AG04449 (cell line): ENCODE measurements at regions of chr1 and their contacts with region 1.

Region 1: DNA sequence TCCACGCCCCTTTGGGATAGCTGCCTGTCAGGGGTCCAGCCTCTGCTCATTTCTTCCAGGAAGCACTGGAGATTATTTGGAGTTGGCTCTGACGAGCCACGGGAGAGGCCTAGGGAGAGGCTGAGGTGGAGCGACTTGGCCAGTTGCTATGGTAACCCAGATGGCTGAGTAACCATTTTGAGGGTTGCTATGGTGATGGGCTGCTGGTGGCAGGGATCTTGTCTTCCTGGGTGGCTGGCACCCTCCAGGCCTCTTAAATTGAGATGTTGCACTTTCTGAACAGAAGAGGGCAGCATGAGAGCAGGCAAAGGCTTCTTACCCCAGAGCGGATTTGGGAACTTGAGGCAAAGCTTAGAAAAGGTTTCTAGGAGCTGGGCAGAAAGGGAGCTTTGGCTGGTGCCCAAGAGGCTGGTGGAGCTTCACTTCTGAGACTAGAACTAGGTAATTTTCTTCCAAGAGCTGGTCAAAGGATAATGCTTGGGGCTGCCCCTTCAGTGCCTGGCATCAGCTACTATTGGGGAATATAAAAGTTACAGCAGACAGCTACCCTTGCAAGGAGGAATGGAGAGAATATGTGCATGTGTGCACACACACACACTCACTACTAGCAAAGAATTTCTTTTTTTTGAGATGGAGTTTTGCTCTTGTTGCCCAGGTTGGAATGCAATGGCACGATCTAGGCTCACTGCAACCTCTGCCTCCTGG is 72.5 kb downstream of the NDUFS5 start:
- DNase-seq: peak; percentile 78
- H3K4me3 ChIP-seq: no peak overlapping the region
- CTCF ChIP-seq: peak; percentile 55

Region 2: DNA sequence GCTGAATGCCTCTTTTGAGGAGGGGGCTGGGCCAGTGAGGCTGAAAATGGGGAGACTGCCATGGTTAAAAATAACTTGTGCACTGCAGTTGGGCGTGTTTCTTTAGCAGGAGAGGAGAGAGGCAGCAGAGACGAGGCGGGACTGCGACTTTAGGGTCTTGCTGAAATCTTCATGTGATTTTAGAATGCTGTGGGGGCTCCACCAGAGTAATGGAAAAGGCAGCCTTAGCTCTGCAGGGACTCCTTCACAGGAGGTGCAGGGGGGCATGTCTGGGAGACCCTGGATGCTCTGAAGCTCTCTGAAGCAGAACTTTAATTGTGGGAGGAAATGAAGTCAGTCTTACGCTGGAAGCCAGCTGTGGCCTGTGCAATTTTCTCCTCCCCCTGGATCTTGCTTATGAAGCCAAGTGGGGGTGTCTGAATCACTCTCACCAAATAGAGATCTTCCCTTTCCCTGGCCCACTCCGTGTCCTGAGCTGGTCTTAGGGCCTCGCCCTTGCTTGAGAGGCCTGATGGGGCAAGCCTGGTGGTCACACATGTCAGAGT is 11.8 kb before region 1 on chr1:
- CTCF ChIA-PET with region 1: interaction called, 53 read pairs
- POLR2A ChIA-PET with region 1: no interaction called
- DNase-seq: no peak
- H3K4me3 ChIP-seq: no peak overlapping the region
- CTCF ChIP-seq: no peak

Region 3: GRCh38 chr1:39204441-39205081 is 105.9 kb after region 1 on chr1 and contains the start of gene MACF1:
- CTCF ChIA-PET with region 1: interaction called, 11 read pairs
- POLR2A ChIA-PET with region 1: no interaction called
- DNase-seq: peak; percentile 81
- H3K4me3 ChIP-seq: peak within 1 kb of the TSS; percentile 70
- CTCF ChIP-seq: peak; percentile 41

Region 4: GRCh38 chr1:39258146-39258924 is 159.6 kb after region 1 on chr1:
- CTCF ChIA-PET with region 1: interaction called, 70 read pairs
- POLR2A ChIA-PET with region 1: no interaction called
- DNase-seq: no peak
- H3K4me3 ChIP-seq: no peak overlapping the region
- CTCF ChIP-seq: peak; percentile 66

Region 5: GRCh38 chr1:39354572-39354971 is 255.9 kb after region 1 on chr1:
- CTCF ChIA-PET with region 1: interaction called, 24 read pairs
- POLR2A ChIA-PET with region 1: no interaction called
- DNase-seq: no peak
- H3K4me3 ChIP-seq: no peak overlapping the region
- CTCF ChIP-seq: no peak

Region 6: GRCh38 chr1:39408641-39409054 is 309.9 kb after region 1 on chr1:
- CTCF ChIA-PET with region 1: interaction called, 49 read pairs
- POLR2A ChIA-PET with region 1: no interaction called
- DNase-seq: peak; percentile 28
- H3K4me3 ChIP-seq: peak overlapping the region; percentile 68
- CTCF ChIP-seq: no peak

Region 7: GRCh38 chr1:39538588-39539465 is 440.1 kb after region 1 on chr1:
- CTCF ChIA-PET with region 1: interaction called, 163 read pairs
- POLR2A ChIA-PET with region 1: no interaction called
- DNase-seq: peak; percentile 9
- H3K4me3 ChIP-seq: no peak overlapping the region
- CTCF ChIP-seq: peak; percentile 79